ENCODE measurements at regions of chr2 and their contacts with region 1.

Region 1: GRCh38 chr2:20595431-20596192 is 55.3 kb downstream of the HS1BP3 start:
- DNase-seq: no peak
- H3K4me3 ChIP-seq: no peak overlapping the region
- CTCF ChIP-seq: no peak

Region 2: GRCh38 chr2:20584637-20585321 is 10.8 kb before region 1 on chr2:
- CTCF ChIA-PET with region 1: interaction called, 63 read pairs
- POLR2A ChIA-PET with region 1: no interaction called
- DNase-seq: peak; percentile 91
- H3K4me3 ChIP-seq: no peak overlapping the region
- CTCF ChIP-seq: no peak

Region 3: GRCh38 chr2:20611077-20611843 is 15.6 kb after region 1 on chr2:
- CTCF ChIA-PET with region 1: interaction called, 11 read pairs
- POLR2A ChIA-PET with region 1: interaction called, 3 read pairs
- DNase-seq: no peak
- H3K4me3 ChIP-seq: no peak overlapping the region
- CTCF ChIP-seq: no peak

Region 4: DNA sequence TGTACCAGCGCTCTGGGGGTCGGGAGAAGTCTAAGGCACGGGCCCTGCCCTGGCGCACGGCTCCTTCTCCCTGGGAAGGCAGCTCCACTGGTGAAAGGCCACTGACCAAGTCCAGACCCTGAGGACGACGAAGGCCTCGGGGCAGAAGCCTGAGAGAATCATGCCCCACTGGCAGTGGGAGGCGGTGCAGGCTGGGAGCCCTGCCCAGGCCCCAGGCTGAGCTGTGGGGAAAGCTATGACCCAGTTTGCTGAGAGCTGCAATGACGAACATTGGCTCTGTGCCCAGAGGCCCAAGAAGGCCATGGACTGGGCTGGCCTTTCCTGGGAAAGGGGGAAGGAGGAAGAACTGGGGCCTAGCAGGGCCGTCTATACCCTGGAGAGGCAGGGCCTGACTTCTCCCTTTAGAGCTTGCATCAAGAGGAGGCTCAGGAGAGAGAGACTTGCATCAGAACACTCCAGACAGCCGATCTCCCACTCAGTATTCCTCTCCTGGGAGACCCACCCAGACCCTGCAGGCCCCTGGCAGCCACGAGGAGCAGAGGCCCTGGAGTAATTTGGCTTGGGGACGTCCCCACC is 22.4 kb after region 1 on chr2:
- CTCF ChIA-PET with region 1: interaction called, 11 read pairs
- POLR2A ChIA-PET with region 1: interaction called, 3 read pairs
- DNase-seq: peak; percentile 95
- H3K4me3 ChIP-seq: no peak overlapping the region
- CTCF ChIP-seq: peak; percentile 59

Measured in AG04449 (cell line).